ENCODE measurements at regions of chr4 and their contacts with region 1.

Region 1: GRCh38 chr4:16869575-16870245 is 28.7 kb downstream of the LDB2 start:
- DNase-seq: no peak
- ATAC-seq: peak in 5 of 8 donors; percentile 29 to 53 (median 34)
- H3K4me3 ChIP-seq: no peak overlapping the region
- H3K27ac ChIP-seq: peak overlapping the region in 4 of 10 donors; percentile 5 to 42 (median 27)
- H3K4me1 ChIP-seq: peaks cover 0 to 45% (median 18%) of the 10 kb centered on the region in 9 donors
- H3K27me3 ChIP-seq: no peaks in the 10 kb centered on the region
- CTCF ChIP-seq: no peak

Region 2: DNA sequence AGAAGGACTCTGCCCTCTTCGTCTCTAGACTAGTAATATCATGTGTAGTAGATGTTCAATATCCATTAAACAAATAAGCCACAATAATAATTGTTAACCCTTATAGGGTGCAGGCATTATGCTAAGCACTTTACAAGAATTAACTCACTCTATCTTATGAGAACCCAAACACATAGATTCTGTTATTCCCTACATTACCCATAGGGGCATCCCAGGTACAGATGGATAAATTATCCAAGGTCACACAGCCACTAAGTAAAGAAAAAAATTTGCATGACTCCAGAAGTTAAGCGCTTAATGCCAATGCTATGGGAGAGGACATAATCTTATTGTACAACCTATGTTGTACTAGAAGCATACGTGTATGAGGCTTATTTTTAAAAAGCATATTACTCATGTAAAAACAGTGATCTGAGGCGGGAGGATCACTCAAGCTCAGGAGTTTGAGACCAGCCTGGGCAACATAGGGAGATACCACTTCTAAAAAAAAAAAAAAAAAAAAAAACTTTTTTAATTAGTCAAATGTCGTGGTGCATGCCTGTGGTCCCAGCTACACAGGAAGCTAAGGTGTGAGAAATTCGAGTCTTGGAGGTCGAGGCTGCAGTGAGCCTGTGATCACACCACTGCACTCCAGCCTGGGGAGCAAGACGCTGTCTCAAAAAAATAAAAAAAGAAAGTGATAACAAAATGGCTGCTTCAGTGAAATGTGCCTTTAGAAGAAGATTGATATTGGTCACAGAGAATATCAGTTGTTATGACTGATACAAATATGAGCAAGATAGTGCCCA is 15.2 kb after region 1 on chr4:
- intact Hi-C with region 1: loop called in 1 of 10 experiments (anchors 2 kb)
- DNase-seq: no peak
- ATAC-seq: no peak
- H3K4me3 ChIP-seq: no peak overlapping the region
- H3K27ac ChIP-seq: no peak overlapping the region
- H3K4me1 ChIP-seq: peaks cover 0 to 52% (median 7%) of the 10 kb centered on the region in 9 donors
- H3K27me3 ChIP-seq: no peaks in the 10 kb centered on the region
- CTCF ChIP-seq: peak in 2 of 9 donors; percentile 10 to 18

Measured in heart right ventricle (tissue), 16 donors.